Left ventricle myocardium inferior (tissue), 1 donor: ENCODE measurements at regions of chrX and their contacts with region 1.

Region 1: GRCh38 chrX:17876164-17876563 is 15.1 kb upstream of the RAI2 start:
- DNase-seq: no peak
- H3K4me3 ChIP-seq: no peak overlapping the region
- H3K27ac ChIP-seq: no peak overlapping the region
- H3K4me1 ChIP-seq: no peaks in the 10 kb centered on the region
- H3K27me3 ChIP-seq: no peaks in the 10 kb centered on the region
- CTCF ChIP-seq: peak; percentile 27

Region 2: DNA sequence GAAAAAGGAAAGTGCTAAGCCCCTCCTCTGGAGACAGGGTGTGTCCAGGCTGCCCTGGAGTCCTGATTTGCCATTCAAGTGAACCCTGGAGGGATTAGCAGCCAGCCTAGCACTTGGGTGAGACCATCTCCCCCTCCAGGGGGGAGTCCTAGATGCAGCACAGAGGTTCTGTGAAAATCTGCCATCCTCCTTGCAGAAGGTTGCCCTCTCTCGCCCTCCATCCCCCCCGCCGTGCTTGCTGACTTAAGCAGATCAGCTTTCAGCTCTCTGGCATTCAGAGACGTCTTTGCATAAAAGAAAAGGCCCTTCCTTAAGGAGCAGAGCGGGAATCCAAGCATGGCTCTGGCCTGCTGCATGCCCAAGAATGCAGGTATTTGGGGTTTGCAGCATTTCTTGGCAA is 240.9 kb before region 1 on chrX:
- intact Hi-C with region 1: no loop called
- DNase-seq: no peak
- H3K4me3 ChIP-seq: no peak overlapping the region
- H3K27ac ChIP-seq: no peak overlapping the region
- H3K4me1 ChIP-seq: no peaks in the 10 kb centered on the region
- H3K27me3 ChIP-seq: no peaks in the 10 kb centered on the region
- CTCF ChIP-seq: no peak

Region 3: DNA sequence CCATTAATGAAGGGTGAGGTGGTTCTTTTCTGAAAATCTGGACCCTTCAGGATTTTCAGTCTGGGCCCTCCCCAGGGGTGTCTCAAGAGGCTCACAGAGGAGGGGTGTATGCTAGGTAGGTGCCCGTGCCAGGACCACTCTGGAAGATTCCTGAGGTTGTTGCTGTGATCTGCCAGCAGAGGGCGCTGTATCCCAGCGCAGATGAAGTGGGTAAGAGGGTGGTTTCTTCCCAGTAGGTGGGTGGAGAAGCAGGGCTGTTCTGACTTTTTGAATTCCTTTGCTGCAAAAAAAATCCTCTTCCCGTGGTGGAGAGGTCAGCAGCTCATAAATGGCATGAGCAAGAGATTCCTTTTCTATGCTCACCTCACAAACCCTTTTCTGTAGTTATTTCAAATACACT is 87.7 kb before region 1 on chrX:
- intact Hi-C with region 1: no loop called
- DNase-seq: no peak
- H3K4me3 ChIP-seq: no peak overlapping the region
- H3K27ac ChIP-seq: no peak overlapping the region
- H3K4me1 ChIP-seq: no peaks in the 10 kb centered on the region
- H3K27me3 ChIP-seq: no peaks in the 10 kb centered on the region
- CTCF ChIP-seq: peak; percentile 79

Region 4: GRCh38 chrX:17812763-17813162 is 63.4 kb before region 1 on chrX:
- intact Hi-C with region 1: loop called (anchors 5 kb)
- DNase-seq: no peak
- H3K4me3 ChIP-seq: no peak overlapping the region
- H3K27ac ChIP-seq: no peak overlapping the region
- H3K4me1 ChIP-seq: peaks cover 14% of the 10 kb centered on the region
- H3K27me3 ChIP-seq: no peaks in the 10 kb centered on the region
- CTCF ChIP-seq: peak; percentile 72

Region 5: GRCh38 chrX:18051690-18052089 is 175.5 kb after region 1 on chrX:
- intact Hi-C with region 1: no loop called
- DNase-seq: no peak
- H3K4me3 ChIP-seq: no peak overlapping the region
- H3K27ac ChIP-seq: no peak overlapping the region
- H3K4me1 ChIP-seq: no peaks in the 10 kb centered on the region
- H3K27me3 ChIP-seq: no peaks in the 10 kb centered on the region
- CTCF ChIP-seq: no peak